ENCODE measurements at regions of chr5 and their contacts with region 1.

Region 1: GRCh38 chr5:14270209-14270702 is 127.1 kb downstream of the TRIO start:
- DNase-seq: peak; percentile 58
- ATAC-seq: peak; percentile 96

Region 2: GRCh38 chr5:13994621-13995253 is 275.5 kb before region 1 on chr5:
- intact Hi-C with region 1: loop called (anchors 10 kb)
- DNase-seq: no peak
- ATAC-seq: no peak

Region 3: GRCh38 chr5:14108170-14108996 is 161.9 kb before region 1 on chr5:
- intact Hi-C with region 1: loop called (anchors 5 kb)
- DNase-seq: peak; percentile 51
- ATAC-seq: peak; percentile 91

Region 4: DNA sequence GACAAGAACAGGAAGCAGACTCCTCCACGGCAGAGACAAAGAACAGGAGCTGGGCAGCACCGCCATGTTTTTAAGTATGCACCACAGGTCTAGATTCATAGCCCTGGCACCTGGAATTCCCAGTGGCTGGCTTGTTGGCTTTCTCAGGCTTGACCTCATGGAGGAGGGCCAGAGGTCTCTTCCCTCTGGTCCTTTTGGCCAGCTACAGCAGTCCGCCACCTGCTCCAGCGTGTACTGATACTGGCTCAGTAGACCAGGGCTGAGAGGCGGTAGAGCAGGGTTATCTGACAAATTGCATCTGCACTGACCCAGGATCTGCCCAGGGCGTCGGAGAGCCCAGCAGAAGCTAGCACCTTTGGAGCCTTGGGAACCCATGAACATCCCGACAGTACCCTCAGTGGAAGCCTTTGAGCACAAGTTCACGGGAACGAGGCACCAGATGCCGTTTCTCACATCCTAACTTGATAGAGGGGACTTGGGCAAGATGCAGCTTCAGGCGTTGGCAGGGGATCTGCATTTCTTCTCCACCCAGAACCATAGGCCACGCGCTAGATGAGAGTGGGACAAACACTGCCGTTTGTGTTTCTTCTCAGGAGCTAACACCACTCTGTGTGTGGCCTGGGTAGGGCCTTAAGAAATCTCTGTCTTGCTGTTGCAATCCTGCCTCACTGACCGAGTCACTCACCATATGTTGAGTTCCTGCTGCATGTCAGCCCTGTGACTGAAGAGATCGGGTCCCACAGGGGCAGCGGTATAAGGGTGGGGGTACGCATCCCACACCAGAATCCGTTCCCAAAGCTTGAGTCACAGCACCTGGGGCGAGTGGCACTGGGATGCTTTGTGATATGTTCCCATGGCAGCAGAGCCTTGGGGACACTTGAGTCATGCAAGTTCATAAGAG is 221.0 kb after region 1 on chr5:
- intact Hi-C with region 1: no loop called
- DNase-seq: peak; percentile 61
- ATAC-seq: peak; percentile 76

Region 5: DNA sequence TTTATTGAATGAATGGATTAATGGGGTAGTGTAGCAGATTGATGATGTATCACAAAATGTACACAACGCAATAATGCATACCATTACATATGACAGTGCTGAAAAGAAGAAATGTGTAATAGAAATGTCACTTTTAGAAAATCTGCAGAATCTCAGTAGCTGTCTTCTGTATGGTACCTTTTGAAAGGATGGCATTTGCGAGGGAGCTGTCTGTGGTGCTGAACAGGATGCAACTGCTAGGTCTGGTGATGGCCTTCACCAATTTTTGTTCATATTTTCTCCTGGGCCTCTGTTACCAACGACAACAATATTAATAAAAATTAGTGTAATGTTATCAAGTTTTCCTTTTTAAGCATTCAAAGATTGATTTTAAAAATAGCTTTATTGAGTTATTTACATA is 358.1 kb after region 1 on chr5:
- intact Hi-C with region 1: no loop called
- DNase-seq: peak; percentile 36
- ATAC-seq: no peak

Region 6: DNA sequence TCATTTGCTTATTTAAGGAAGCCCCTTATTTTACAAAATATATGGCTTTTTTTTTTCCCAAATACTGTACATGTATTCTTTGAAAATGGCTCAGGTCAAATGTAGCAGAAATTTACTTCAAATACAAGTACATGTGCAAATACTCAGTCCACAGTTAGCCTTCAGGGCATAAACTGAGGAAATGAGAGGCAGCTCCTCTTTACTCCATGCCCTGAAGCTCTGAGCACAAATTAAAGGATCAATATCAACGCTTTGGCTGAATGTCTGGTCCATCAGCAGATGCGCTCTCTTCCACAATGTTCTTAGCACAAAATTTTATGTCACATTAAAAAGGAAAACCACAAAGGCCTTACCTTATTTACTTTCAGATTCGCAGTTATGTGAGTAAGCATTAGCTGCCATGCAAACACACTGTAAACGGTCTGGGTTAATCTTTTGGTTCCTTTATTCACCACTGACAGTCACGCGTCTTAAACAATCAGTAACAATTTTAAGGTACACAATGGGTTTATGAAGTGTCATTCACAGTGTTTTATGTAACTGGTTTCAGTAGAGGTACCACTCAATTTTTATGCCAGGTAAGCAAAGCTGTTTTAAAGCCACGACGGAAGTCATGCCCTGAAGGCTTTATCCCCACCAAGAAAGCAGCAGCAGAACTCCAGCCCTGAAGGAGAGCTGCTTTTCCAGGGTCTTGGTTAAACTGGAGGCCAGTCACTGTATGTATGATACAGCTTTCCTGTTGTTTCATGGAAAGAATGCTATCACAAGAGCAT is 497.7 kb after region 1 on chr5:
- intact Hi-C with region 1: no loop called
- DNase-seq: no peak
- ATAC-seq: no peak